Common myeloid progenitor, CD34-positive (primary cell): ENCODE measurements at regions of chr17 and their contacts with region 1.

Region 1: DNA sequence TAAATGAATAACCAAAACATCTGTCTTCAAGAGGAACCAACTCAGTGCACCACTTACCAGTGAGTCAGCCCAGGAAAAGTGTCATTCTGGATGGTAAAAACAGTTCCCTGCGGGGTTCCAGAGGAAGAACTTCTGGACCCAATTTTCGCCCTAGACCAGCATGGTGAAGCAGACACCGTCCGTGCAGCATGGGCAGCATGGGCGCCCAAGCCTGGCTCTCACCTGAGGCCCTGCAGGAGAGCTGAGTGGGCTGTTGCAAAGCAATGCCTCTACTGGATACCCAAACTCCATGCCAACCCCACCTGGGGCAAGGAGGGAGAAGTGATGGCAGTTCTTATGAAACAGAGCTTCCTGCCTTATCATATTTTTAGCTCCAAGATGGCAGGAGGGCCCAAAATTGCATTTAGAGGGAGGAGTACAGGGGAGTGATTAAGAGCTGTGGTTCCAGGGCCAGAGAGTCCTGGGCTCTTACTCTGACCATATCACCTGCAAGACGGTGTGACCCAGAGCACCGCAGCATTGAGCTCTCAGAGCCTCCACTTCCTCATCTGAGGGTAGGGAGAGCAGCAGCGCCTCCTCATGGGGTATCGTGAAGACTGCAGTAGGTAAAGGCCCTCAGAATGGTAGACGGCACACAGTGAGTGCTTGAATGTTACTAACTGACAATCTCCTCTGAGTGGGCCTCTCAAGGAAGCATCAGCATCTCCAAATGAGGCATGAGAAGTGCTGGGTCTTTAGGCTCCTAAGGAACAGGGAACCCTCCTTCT is 16.6 kb upstream of the INPP5K start:
- DNase-seq: peak; percentile 54 to 72 (median 70)
- H3K4me3 ChIP-seq: no peak overlapping the region
- H3K27ac ChIP-seq: no peak overlapping the region
- H3K4me1 ChIP-seq: no peaks in the 10 kb centered on the region
- H3K27me3 ChIP-seq: no peaks in the 10 kb centered on the region

Region 2: GRCh38 chr17:1455797-1456599 is 77.0 kb before region 1 on chr17 and contains the start of gene CRK:
- CTCF ChIA-PET with region 1: no interaction called
- POLR2A ChIA-PET with region 1: no interaction called
- DNase-seq: peak; percentile 94 to 97 (median 96)
- H3K4me3 ChIP-seq: peak within 1 kb of the TSS; percentile 85 to 97 (median 92)
- H3K27ac ChIP-seq: peak within 1 kb of the TSS; percentile 91 to 95
- H3K4me1 ChIP-seq: peaks cover 7 to 19% (median 18%) of the 10 kb centered on the region in 4 experiments
- H3K27me3 ChIP-seq: peaks cover 2 to 37% (median 15%) of the 10 kb centered on the region in 5 experiments

Region 3: DNA sequence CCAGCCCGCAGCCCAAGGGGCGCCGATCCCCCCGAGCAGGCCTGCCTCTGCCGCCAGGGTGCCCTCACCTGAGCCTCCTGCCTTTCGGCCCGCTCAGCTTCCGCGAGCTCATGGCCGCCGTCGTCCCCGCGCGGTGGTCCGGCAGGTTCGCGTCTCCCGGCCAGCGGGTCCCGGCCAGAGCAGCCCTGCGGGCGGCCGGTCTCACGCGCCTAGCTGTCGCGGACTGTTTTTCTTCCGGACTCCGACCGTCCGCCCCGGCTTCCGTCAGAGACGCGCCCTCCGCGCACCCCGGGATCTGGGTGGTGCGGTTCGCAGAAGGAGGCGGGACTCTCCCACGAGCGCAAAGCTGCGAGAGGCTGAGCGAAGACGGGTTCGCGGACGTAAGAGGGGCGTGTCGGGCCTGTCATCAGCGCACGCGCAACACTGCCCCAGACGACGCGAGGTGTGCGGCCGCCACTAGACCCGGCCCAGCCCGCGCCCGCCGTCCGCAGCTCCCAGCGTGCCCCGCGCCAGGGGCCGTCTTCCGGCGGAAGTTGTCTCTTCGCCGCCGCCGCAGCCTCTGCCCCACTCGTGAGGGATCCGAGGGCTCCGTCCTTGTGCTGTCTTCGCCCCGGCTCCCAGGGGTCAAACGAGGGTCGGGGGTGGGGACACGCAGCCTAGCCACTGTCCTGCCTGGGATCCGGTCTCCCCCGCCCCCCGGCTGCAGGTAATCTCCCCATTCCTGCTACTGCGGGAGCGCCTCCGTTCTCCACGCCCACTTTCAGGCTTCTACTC is 16.4 kb before region 1 on chr17 and contains the start of gene INPP5K:
- CTCF ChIA-PET with region 1: interaction called, 10 read pairs
- POLR2A ChIA-PET with region 1: no interaction called
- DNase-seq: peak; percentile 98 to 99 (median 99)
- H3K4me3 ChIP-seq: peak within 1 kb of the TSS; percentile 89 to 99 (median 94)
- H3K27ac ChIP-seq: peak within 1 kb of the TSS; percentile 84 to 90
- H3K4me1 ChIP-seq: peaks cover 7 to 19% (median 18%) of the 10 kb centered on the region in 4 experiments
- H3K27me3 ChIP-seq: no peaks in the 10 kb centered on the region